AG04450 (cell line): ENCODE measurements at regions of chr11 and their contacts with region 1.

Region 1: GRCh38 chr11:103671143-103671651 is 365.2 kb upstream of the DDI1 start:
- DNase-seq: no peak
- H3K4me3 ChIP-seq: no peak overlapping the region
- H3K27ac ChIP-seq: no peak overlapping the region
- H3K27me3 ChIP-seq: no peaks in the 10 kb centered on the region
- CTCF ChIP-seq: 0 out of 2 replicates have a peak, but pooled peaks have one; percentile 16

Region 2: DNA sequence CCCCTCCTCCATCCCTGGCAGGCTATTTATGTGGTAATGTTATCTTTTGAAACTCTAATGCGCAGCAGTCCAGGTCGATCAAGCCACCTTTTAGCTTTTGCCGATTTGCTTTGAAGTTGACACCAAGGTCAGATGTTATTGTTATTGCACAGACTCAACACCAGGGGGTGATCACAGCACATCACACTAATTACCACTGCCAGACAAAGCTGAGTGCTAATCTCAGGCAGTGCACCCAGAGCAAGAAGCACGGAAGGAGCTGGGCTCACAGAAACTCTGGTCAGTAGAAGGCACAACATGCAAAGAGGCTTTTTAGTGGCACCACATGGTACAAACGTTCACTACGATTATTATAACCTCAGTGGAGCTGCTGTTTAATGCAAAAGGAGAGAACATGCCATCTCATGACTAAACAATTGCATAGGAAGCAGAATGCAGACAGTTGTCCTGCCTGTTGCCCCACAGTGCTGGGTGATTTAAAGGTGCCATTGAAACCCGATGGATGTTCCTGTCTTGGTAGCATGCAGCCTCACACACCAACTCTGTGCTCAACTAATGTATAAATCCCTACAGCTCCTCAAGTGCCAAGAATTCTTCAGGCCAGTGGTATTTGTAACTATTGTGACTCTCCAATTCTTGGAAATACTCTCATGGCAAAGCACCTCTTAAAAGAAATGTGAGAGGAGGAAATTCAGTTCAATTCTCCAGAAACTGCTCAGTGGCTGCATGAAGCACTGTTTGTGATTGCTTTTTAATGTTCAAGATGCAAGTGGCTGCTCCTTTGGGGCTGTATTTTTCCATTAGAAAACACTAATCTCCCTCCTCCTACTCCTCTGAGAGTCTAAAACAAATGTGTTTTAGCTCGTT is 11.4 kb after region 1 on chr11:
- CTCF ChIA-PET with region 1: interaction called, 10 read pairs
- POLR2A ChIA-PET with region 1: no interaction called
- DNase-seq: peak; percentile 39
- H3K4me3 ChIP-seq: no peak overlapping the region
- H3K27ac ChIP-seq: no peak overlapping the region
- H3K27me3 ChIP-seq: no peaks in the 10 kb centered on the region
- CTCF ChIP-seq: peak; percentile 75